ENCODE measurements at regions of chr11 and their contacts with region 1.

Region 1: DNA sequence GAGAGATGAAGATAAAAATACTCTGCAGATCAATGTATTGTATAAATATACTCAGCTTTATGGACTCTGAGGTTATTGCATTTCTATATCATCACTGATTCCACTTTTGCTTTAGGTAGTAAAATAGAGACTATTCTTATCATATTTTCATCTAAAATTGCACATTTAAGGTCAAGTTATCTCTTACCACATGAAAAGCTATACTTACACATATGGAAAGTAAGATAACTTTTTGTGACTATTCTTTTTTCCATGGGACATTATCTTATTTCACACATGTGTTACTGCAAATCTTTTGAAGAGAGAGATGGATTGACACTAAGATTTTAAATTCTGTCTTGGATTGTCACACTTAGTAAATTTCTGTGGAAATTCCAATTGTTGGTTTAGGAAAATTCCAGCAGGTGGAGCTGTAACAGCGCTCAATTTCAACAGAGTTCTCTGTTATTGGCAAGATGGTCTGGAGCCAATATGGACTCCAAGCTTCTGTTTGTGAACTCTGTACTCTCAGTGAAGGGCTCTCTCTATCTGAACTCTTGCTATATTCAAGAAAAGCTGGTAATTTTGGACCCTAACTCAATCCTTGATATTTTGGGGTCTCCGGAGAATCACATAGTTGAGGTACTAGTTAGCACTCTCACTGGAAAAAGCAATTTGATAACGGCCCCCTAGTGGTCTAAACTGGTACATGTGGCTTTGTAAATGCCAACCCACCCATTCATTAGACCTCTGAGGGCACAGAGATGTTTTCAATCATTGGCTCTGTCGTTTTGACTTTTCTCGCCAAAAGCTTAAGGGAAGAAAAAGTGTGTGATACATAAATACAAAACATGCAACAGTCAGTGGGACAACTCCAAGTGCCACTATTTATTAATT is 429.7 kb downstream of the ETS1 start:
- DNase-seq: peak; percentile 22 to 60 (median 54)
- ATAC-seq: peak; percentile 69; the same call in 2 of the 3 replicates
- H3K4me3 ChIP-seq: no peak overlapping the region
- H3K27ac ChIP-seq: no peak overlapping the region
- H3K4me1 ChIP-seq: no peaks in the 10 kb centered on the region
- H3K27me3 ChIP-seq: no peaks in the 10 kb centered on the region
- CTCF ChIP-seq: peak; percentile 46 to 62 (median 61); a peak in 5 of 6 replicates
- EP300 ChIP-seq: no peak
- POLR2A ChIP-seq: no peak
- RAD21 ChIP-seq: peak; percentile 51 to 65

Region 2: DNA sequence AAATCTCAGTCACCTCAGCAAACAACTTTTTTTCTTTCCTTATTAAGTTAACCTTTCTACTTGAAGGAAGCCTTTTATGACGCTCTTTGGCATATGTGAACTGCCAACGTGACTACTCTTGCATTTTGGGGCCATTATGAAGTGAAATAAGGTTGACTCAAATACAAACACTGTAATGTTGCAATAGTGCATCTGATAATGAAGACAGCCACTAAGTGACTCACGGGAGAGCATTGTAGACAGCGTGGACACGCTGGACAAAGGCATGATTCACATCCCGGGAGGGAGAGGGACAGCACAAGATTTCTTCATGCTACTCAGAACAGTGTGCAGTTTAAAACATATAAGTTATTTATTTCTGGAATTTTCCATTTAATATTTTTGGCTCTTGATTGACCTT is 131.1 kb before region 1 on chr11:
- CTCF ChIA-PET with region 1: no interaction called
- POLR2A ChIA-PET with region 1: no interaction called
- in situ Hi-C with region 1: no loop called
- intact Hi-C with region 1: loop called (anchors 2 kb)
- DNase-seq: no peak
- ATAC-seq: no peak
- H3K4me3 ChIP-seq: no peak overlapping the region
- H3K27ac ChIP-seq: no peak overlapping the region
- H3K4me1 ChIP-seq: no peaks in the 10 kb centered on the region
- H3K27me3 ChIP-seq: no peaks in the 10 kb centered on the region
- CTCF ChIP-seq: no peak
- EP300 ChIP-seq: no peak
- POLR2A ChIP-seq: no peak
- RAD21 ChIP-seq: no peak